Left ventricle myocardium inferior (tissue), 1 donor: ENCODE measurements at regions of chr11 and their contacts with region 1.

Region 1: GRCh38 chr11:101456812-101457211 is 127.0 kb downstream of the TRPC6 start:
- DNase-seq: no peak
- H3K4me3 ChIP-seq: no peak overlapping the region
- H3K27ac ChIP-seq: no peak overlapping the region
- H3K4me1 ChIP-seq: no peaks in the 10 kb centered on the region
- H3K27me3 ChIP-seq: no peaks in the 10 kb centered on the region
- CTCF ChIP-seq: peak; percentile 59

Region 2: GRCh38 chr11:101848262-101848661 is 391.4 kb after region 1 on chr11:
- intact Hi-C with region 1: loop called (anchors 5 kb)
- DNase-seq: no peak
- H3K4me3 ChIP-seq: no peak overlapping the region
- H3K27ac ChIP-seq: no peak overlapping the region
- H3K4me1 ChIP-seq: no peaks in the 10 kb centered on the region
- H3K27me3 ChIP-seq: no peaks in the 10 kb centered on the region
- CTCF ChIP-seq: peak; percentile 57